B cell (primary cell): ENCODE measurements at regions of chr7 and their contacts with region 1.

Region 1: DNA sequence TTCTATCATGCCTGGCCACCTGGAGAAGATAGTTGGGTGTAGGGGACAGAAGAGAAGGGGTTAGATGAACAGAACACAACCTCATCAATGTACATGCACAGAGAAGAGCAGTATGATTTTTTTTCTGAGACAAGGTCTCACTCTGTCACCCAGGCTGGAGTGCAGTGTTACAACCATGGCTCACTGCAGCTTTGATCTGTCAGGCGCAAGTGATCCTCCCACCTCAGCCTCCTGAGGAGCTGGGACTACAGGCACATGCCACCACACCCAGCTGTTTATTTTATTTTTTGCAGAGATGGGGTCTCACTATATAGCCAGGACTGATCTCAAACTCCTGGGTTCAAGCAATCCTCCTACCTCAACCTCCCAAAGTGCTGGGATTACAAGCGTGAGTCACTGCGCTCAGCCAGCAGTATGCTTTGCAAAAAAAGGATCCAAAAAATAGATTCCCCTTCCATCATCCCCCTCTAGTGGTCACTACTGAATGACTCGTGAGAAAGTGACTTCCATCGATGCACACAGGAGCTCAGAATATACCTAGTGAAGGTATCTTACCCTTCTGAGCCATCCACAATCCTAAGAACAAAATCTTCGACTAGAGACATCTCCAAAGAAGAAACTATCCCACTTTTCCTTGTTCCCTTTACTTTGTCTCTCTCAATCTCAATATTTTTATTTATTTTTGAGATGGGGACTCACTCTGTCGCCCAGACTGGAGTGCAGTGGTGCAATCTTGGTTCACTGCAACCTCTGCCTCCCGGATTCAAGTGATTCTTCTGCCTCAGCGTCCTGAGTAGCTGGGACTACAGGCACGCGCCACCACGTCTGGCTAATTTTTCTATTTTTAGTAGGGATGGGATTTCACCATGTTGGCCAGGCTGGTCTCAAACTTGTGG is 21.0 kb downstream of the ZCWPW1 start:
- DNase-seq: peak; percentile 86
- ATAC-seq: peak; percentile 92
- H3K4me3 ChIP-seq: no peak overlapping the region
- H3K4me3 Mint-ChIP-seq: no peak overlapping the region
- H3K27ac ChIP-seq: no peak overlapping the region
- H3K27ac Mint-ChIP-seq: no peak overlapping the region
- H3K4me1 ChIP-seq: peaks cover 15 to 20% of the 10 kb centered on the region in 2 donors
- H3K4me1 Mint-ChIP-seq: peaks cover 9% of the 10 kb centered on the region
- H3K27me3 ChIP-seq: no peaks in the 10 kb centered on the region
- H3K27me3 Mint-ChIP-seq: no peaks in the 10 kb centered on the region
- CTCF ChIP-seq: peak; percentile 81

Region 2: GRCh38 chr7:100190048-100190711 is 217.4 kb before region 1 on chr7:
- CTCF ChIA-PET with region 1: interaction called, 7 read pairs
- POLR2A ChIA-PET with region 1: no interaction called
- intact Hi-C with region 1: loop called (anchors 2 kb)
- DNase-seq: peak; percentile 74
- ATAC-seq: peak; percentile 50
- H3K4me3 ChIP-seq: no peak overlapping the region
- H3K4me3 Mint-ChIP-seq: peak overlapping the region; percentile 49
- H3K27ac ChIP-seq: peak overlapping the region; percentile 81 to 83
- H3K27ac Mint-ChIP-seq: peak overlapping the region; percentile 93
- H3K4me1 ChIP-seq: peaks cover 52 to 57% of the 10 kb centered on the region in 2 donors
- H3K4me1 Mint-ChIP-seq: peaks cover 54% of the 10 kb centered on the region
- H3K27me3 ChIP-seq: no peaks in the 10 kb centered on the region
- H3K27me3 Mint-ChIP-seq: no peaks in the 10 kb centered on the region
- CTCF ChIP-seq: peak; percentile 74

Region 3: DNA sequence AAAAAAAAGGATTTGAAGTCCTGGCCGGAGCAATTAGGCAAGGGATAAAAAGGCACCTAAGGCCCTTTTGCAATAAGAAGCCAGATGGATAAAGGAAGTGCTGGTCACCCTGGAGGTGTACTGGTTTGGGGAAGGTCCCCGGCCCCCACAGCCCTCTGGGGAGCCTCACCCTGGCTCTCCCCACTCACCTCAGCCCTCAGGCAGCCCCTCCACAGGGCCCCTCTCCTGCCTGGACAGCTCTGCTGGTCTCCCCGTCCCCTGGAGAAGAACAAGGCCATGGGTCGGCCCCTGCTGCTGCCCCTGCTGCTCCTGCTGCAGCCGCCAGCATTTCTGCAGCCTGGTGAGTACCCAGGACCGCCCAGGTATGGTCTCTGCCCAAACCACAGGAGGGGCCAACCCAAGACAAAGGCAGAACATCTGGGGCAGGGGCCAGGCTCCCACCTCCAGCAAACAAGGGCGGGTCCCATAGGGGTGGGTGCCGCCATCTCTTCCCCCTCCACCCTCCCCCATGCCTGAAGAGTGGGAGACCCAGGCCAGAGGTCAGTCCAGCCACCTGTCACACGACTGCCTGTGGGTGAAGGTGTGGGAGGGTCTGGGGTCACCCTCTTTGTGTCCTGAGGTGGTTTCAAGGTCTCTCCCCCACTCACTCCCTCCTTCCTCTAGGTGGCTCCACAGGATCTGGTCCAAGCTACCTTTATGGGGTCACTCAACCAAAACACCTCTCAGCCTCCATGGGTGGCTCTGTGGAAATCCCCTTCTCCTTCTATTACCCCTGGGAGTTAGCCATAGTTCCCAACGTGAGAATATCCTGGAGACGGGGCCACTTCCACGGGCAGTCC is 49.3 kb before region 1 on chr7 and contains the start of gene PILRB:
- CTCF ChIA-PET with region 1: interaction called, 67 read pairs
- POLR2A ChIA-PET with region 1: interaction called, 9 read pairs
- intact Hi-C with region 1: loop called (anchors 1 kb)
- DNase-seq: peak; percentile 69
- ATAC-seq: peak; percentile 88
- H3K4me3 ChIP-seq: no peak within 1 kb of the TSS
- H3K4me3 Mint-ChIP-seq: no peak within 1 kb of the TSS
- H3K27ac ChIP-seq: peak within 1 kb of the TSS; percentile 49 to 75
- H3K27ac Mint-ChIP-seq: peak within 1 kb of the TSS; percentile 90
- H3K4me1 ChIP-seq: peaks cover 10 to 24% of the 10 kb centered on the region in 2 donors
- H3K4me1 Mint-ChIP-seq: peaks cover 22% of the 10 kb centered on the region
- H3K27me3 ChIP-seq: no peaks in the 10 kb centered on the region
- H3K27me3 Mint-ChIP-seq: no peaks in the 10 kb centered on the region
- CTCF ChIP-seq: peak; percentile 48
- total RNA-seq, gene PILRB: 162 and 174 TPM in 2 replicates

Region 4: DNA sequence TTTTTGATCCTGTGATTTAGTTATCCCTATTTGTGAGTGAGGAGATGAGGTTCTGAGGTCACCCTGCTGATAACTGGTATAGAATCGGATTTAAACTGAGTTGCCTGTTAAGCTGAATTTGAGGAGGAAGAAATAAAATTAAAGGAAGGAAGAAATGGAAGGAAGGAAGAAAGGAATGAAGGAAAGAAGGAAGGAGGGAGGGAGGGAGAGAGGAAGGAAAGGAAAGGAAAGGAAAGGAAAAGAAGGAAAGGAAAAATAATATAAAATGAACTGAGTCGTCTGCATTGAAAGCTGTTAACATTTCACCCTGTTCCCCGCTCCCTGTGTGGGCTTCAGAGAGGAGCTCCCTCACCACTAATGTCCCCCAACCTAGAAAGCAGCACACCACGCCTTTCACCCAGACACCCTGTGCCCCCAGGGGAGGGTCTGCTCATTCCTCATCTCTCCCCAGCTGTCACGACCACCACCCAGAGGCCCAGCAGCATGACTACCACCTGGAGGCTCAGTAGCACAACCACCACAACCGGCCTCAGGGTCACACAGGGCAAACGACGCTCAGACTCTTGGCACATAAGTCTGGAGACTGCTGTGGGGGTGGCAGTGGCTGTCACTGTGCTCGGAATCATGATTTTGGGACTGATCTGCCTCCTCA is 18.0 kb before region 1 on chr7:
- CTCF ChIA-PET with region 1: interaction called, 12 read pairs
- POLR2A ChIA-PET with region 1: no interaction called
- intact Hi-C with region 1: no loop called
- DNase-seq: no peak
- ATAC-seq: no peak
- H3K4me3 ChIP-seq: no peak overlapping the region
- H3K4me3 Mint-ChIP-seq: no peak overlapping the region
- H3K27ac ChIP-seq: no peak overlapping the region
- H3K27ac Mint-ChIP-seq: no peak overlapping the region
- H3K4me1 ChIP-seq: peaks cover 15 to 16% of the 10 kb centered on the region in 2 donors
- H3K4me1 Mint-ChIP-seq: peaks cover 26% of the 10 kb centered on the region
- H3K27me3 ChIP-seq: no peaks in the 10 kb centered on the region
- H3K27me3 Mint-ChIP-seq: no peaks in the 10 kb centered on the region
- CTCF ChIP-seq: no peak

Region 5: DNA sequence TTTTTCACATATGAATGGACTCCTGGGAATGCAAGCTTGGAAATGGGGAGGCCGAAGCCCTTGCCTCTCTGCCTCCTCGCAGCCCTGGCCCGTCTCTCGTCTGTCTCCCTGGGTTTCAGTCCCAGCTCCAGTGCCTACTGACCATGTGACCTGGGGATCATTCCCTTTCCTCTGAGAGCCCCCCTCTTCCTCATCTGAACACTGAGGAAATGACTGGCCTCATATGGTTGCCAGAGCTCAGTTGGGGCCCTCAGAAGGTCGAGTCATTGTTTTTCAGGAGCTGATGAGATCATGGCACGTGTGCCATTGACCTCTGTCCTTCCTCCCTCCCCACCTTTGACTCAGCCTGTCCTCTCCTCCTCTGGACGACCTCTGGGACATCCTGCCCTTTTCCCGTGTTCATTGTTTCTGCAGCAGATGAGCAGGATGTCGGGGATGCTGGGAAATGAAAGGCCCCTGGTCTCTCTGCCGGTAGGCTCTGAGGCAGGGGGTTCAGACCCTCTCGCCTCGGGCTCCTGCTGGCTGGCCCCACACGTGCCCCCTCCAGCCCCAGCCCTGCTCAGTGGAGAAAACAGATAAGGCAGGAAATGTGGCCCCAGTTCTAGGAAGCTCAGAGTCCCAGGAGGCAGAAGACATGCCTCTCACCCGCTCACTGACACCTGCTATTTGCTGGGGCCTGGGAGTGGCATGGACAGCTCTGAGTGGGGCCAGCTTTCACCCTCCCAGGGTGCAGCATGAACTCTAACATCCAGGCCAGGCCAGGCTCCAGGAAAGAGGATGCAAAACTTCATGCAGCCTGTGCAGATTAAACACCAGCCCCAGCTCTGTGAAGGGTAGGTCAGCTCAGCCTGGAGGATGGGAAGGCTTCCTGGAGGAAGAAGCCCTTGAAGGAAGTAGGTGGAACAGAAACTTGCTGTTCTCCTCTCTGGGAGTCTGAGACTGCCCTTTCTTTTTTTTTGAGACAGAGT is 37.1 kb after region 1 on chr7:
- CTCF ChIA-PET with region 1: interaction called, 26 read pairs
- POLR2A ChIA-PET with region 1: interaction called, 3 read pairs
- intact Hi-C with region 1: no loop called
- DNase-seq: no peak
- ATAC-seq: peak; percentile 47
- H3K4me3 ChIP-seq: no peak overlapping the region
- H3K4me3 Mint-ChIP-seq: no peak overlapping the region
- H3K27ac ChIP-seq: peak overlapping the region; percentile 30 to 51
- H3K27ac Mint-ChIP-seq: peak overlapping the region; percentile 77
- H3K4me1 ChIP-seq: peaks cover 15 to 22% of the 10 kb centered on the region in 2 donors
- H3K4me1 Mint-ChIP-seq: peaks cover 15% of the 10 kb centered on the region
- H3K27me3 ChIP-seq: no peaks in the 10 kb centered on the region
- H3K27me3 Mint-ChIP-seq: no peaks in the 10 kb centered on the region
- CTCF ChIP-seq: no peak

Region 6: DNA sequence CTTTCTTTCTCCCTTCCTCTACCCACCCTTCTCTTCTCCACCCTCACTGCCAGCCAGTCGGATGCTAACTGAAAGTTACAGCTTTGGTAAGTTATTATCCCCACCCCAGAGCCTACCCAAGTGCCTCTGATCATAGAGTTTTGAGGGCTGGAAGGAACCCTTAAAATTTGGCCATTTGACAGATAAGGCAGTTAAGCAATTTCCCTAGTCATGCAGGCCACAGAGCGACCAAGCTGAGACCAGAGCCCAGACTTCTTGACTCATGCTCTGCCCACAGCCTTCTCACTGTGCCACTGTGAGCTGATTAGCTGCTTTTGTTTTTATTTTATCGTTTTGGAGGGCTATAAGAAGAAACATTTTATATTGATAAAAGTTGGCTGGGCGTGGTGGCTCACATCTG is 149.0 kb after region 1 on chr7:
- CTCF ChIA-PET with region 1: no interaction called
- POLR2A ChIA-PET with region 1: no interaction called
- intact Hi-C with region 1: no loop called
- DNase-seq: no peak
- ATAC-seq: no peak
- H3K4me3 ChIP-seq: no peak overlapping the region
- H3K4me3 Mint-ChIP-seq: no peak overlapping the region
- H3K27ac ChIP-seq: no peak overlapping the region
- H3K27ac Mint-ChIP-seq: no peak overlapping the region
- H3K4me1 ChIP-seq: peaks cover 3 to 5% of the 10 kb centered on the region in 2 donors
- H3K4me1 Mint-ChIP-seq: peaks cover 5% of the 10 kb centered on the region
- H3K27me3 ChIP-seq: no peaks in the 10 kb centered on the region
- H3K27me3 Mint-ChIP-seq: no peaks in the 10 kb centered on the region
- CTCF ChIP-seq: no peak